CD8-positive, alpha-beta T cell (primary cell): ENCODE measurements at regions of chr9 and their contacts with region 1.

Region 1: GRCh38 chr9:31259824-31260223 is 1124.6 kb upstream of the ACO1 start:
- DNase-seq: peak in 3 of 9 experiments; percentile 6 to 80 (median 56)
- ATAC-seq: peak; percentile 87
- H3K4me3 ChIP-seq: no peak overlapping the region
- H3K4me3 Mint-ChIP-seq: peak overlapping the region; percentile 11
- H3K27ac ChIP-seq: no peak overlapping the region
- H3K27ac Mint-ChIP-seq: peak overlapping the region; percentile 81
- H3K4me1 ChIP-seq: peaks cover 20% of the 10 kb centered on the region
- H3K4me1 Mint-ChIP-seq: peaks cover 12% of the 10 kb centered on the region
- H3K27me3 ChIP-seq: no peaks in the 10 kb centered on the region
- H3K27me3 Mint-ChIP-seq: no peaks in the 10 kb centered on the region
- CTCF ChIP-seq: no peak

Region 2: GRCh38 chr9:31045789-31046188 is 214.0 kb before region 1 on chr9:
- CTCF ChIA-PET with region 1: no interaction called
- POLR2A ChIA-PET with region 1: no interaction called
- intact Hi-C with region 1: no loop called
- DNase-seq: no peak
- ATAC-seq: no peak
- H3K4me3 ChIP-seq: no peak overlapping the region
- H3K4me3 Mint-ChIP-seq: no peak overlapping the region
- H3K27ac ChIP-seq: no peak overlapping the region
- H3K27ac Mint-ChIP-seq: no peak overlapping the region
- H3K4me1 ChIP-seq: no peaks in the 10 kb centered on the region
- H3K4me1 Mint-ChIP-seq: no peaks in the 10 kb centered on the region
- H3K27me3 ChIP-seq: no peaks in the 10 kb centered on the region
- H3K27me3 Mint-ChIP-seq: no peaks in the 10 kb centered on the region
- CTCF ChIP-seq: no peak

Region 3: GRCh38 chr9:31210978-31211570 is 48.8 kb before region 1 on chr9:
- CTCF ChIA-PET with region 1: no interaction called
- POLR2A ChIA-PET with region 1: no interaction called
- intact Hi-C with region 1: loop called in 1 of 2 experiments (anchors 10 kb)
- DNase-seq: peak in 5 of 9 experiments; percentile 0 to 10 (median 5)
- ATAC-seq: no peak
- H3K4me3 ChIP-seq: no peak overlapping the region
- H3K4me3 Mint-ChIP-seq: no peak overlapping the region
- H3K27ac ChIP-seq: no peak overlapping the region
- H3K27ac Mint-ChIP-seq: no peak overlapping the region
- H3K4me1 ChIP-seq: peaks cover 6% of the 10 kb centered on the region
- H3K4me1 Mint-ChIP-seq: peaks cover 28% of the 10 kb centered on the region
- H3K27me3 ChIP-seq: no peaks in the 10 kb centered on the region
- H3K27me3 Mint-ChIP-seq: no peaks in the 10 kb centered on the region
- CTCF ChIP-seq: no peak

Region 4: GRCh38 chr9:31597977-31598376 is 338.2 kb after region 1 on chr9:
- CTCF ChIA-PET with region 1: no interaction called
- POLR2A ChIA-PET with region 1: no interaction called
- intact Hi-C with region 1: no loop called
- DNase-seq: peak in 2 of 9 experiments; percentile 8 to 28
- ATAC-seq: peak; percentile 71
- H3K4me3 ChIP-seq: no peak overlapping the region
- H3K4me3 Mint-ChIP-seq: no peak overlapping the region
- H3K27ac ChIP-seq: no peak overlapping the region
- H3K27ac Mint-ChIP-seq: no peak overlapping the region
- H3K4me1 ChIP-seq: peaks cover 9% of the 10 kb centered on the region
- H3K4me1 Mint-ChIP-seq: peaks cover 10% of the 10 kb centered on the region
- H3K27me3 ChIP-seq: no peaks in the 10 kb centered on the region
- H3K27me3 Mint-ChIP-seq: no peaks in the 10 kb centered on the region
- CTCF ChIP-seq: no peak